CD14-positive monocyte (primary cell): ENCODE measurements at regions of chr17 and their contacts with region 1.

Region 1: GRCh38 chr17:63275318-63275970 is 170.7 kb downstream of the CYB561 start:
- DNase-seq: peak; percentile 83 to 95 (median 92)
- H3K4me3 ChIP-seq: no peak overlapping the region
- H3K4me3 Mint-ChIP-seq: peak overlapping the region in 1 of 2 donors; percentile 16
- H3K27ac ChIP-seq: peak overlapping the region in 1 of 2 donors; percentile 77
- H3K27ac Mint-ChIP-seq: peak overlapping the region; percentile 50 to 92 (median 85)
- H3K4me1 ChIP-seq: peaks cover 12 to 31% of the 10 kb centered on the region in 2 donors
- H3K4me1 Mint-ChIP-seq: peaks cover 33% of the 10 kb centered on the region
- H3K27me3 ChIP-seq: no peaks in the 10 kb centered on the region
- H3K27me3 Mint-ChIP-seq: peaks cover 0 to 2% (median 0%) of the 10 kb centered on the region in 3 donors
- CTCF ChIP-seq: no peak

Region 2: GRCh38 chr17:62892870-62893338 is 382.5 kb before region 1 on chr17:
- intact Hi-C with region 1: loop called in 1 of 2 experiments (anchors 10 kb)
- DNase-seq: peak; percentile 88 to 97 (median 96)
- H3K4me3 ChIP-seq: peak overlapping the region in 1 of 3 experiments; percentile 31
- H3K4me3 Mint-ChIP-seq: peak overlapping the region in 1 of 2 donors; percentile 51
- H3K27ac ChIP-seq: peak overlapping the region; percentile 68 to 87
- H3K27ac Mint-ChIP-seq: peak overlapping the region; percentile 79 to 94 (median 88)
- H3K4me1 ChIP-seq: peaks cover 54% of the 10 kb centered on the region in 2 donors
- H3K4me1 Mint-ChIP-seq: peaks cover 48% of the 10 kb centered on the region
- H3K27me3 ChIP-seq: no peaks in the 10 kb centered on the region
- H3K27me3 Mint-ChIP-seq: peaks cover 0 to 3% (median 0%) of the 10 kb centered on the region in 3 donors
- CTCF ChIP-seq: no peak

Region 3: DNA sequence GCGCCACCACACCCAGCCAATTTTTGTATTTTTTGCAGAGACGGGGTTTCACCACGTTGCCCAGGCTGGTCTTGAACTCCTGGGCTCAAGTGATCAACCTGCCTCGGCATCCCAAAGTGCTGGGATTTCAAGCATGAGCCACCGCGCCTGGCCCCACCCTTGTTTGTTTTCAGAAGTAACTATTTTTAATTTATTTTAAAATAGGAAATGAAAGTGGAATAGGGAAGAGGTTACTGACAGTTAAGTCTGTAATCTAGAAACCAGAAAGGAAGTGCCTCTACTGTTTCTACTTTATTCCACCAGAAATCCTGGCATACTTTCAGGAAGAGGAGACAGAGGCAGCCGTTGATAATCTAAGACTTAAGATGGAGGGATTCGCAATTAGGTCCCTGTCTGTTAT is 83.8 kb before region 1 on chr17:
- intact Hi-C with region 1: loop called in 1 of 2 experiments (anchors 10 kb)
- DNase-seq: peak; percentile 58 to 75 (median 68)
- H3K4me3 ChIP-seq: peak overlapping the region in 1 of 3 experiments; percentile 48
- H3K4me3 Mint-ChIP-seq: peak overlapping the region in 1 of 2 donors; percentile 73
- H3K27ac ChIP-seq: peak overlapping the region; percentile 69 to 70
- H3K27ac Mint-ChIP-seq: peak overlapping the region; percentile 51 to 94 (median 83)
- H3K4me1 ChIP-seq: peaks cover 28 to 46% of the 10 kb centered on the region in 2 donors
- H3K4me1 Mint-ChIP-seq: peaks cover 43% of the 10 kb centered on the region
- H3K27me3 ChIP-seq: no peaks in the 10 kb centered on the region
- H3K27me3 Mint-ChIP-seq: no peaks in the 10 kb centered on the region
- CTCF ChIP-seq: no peak

Region 4: GRCh38 chr17:63232565-63233310 is 42.7 kb before region 1 on chr17:
- intact Hi-C with region 1: no loop called
- DNase-seq: no peak
- H3K4me3 ChIP-seq: no peak overlapping the region
- H3K4me3 Mint-ChIP-seq: no peak overlapping the region
- H3K27ac ChIP-seq: no peak overlapping the region
- H3K27ac Mint-ChIP-seq: no peak overlapping the region
- H3K4me1 ChIP-seq: no peaks in the 10 kb centered on the region
- H3K4me1 Mint-ChIP-seq: no peaks in the 10 kb centered on the region
- H3K27me3 ChIP-seq: no peaks in the 10 kb centered on the region
- H3K27me3 Mint-ChIP-seq: no peaks in the 10 kb centered on the region
- CTCF ChIP-seq: no peak